ENCODE measurements at regions of chr18 and their contacts with region 1.

Region 1: GRCh38 chr18:44895176-44895798 is 214.6 kb downstream of the SETBP1 start:
- DNase-seq: peak; percentile 52
- H3K4me3 ChIP-seq: no peak overlapping the region
- H3K27ac ChIP-seq: no peak overlapping the region
- H3K4me1 ChIP-seq: peaks cover 19% of the 10 kb centered on the region
- H3K27me3 ChIP-seq: no peaks in the 10 kb centered on the region

Region 2: GRCh38 chr18:44651453-44651852 is 243.8 kb before region 1 on chr18:
- in situ Hi-C with region 1: no loop called
- DNase-seq: peak; percentile 78
- H3K4me3 ChIP-seq: no peak overlapping the region
- H3K27ac ChIP-seq: no peak overlapping the region
- H3K4me1 ChIP-seq: peaks cover 24% of the 10 kb centered on the region
- H3K27me3 ChIP-seq: no peaks in the 10 kb centered on the region

Region 3: DNA sequence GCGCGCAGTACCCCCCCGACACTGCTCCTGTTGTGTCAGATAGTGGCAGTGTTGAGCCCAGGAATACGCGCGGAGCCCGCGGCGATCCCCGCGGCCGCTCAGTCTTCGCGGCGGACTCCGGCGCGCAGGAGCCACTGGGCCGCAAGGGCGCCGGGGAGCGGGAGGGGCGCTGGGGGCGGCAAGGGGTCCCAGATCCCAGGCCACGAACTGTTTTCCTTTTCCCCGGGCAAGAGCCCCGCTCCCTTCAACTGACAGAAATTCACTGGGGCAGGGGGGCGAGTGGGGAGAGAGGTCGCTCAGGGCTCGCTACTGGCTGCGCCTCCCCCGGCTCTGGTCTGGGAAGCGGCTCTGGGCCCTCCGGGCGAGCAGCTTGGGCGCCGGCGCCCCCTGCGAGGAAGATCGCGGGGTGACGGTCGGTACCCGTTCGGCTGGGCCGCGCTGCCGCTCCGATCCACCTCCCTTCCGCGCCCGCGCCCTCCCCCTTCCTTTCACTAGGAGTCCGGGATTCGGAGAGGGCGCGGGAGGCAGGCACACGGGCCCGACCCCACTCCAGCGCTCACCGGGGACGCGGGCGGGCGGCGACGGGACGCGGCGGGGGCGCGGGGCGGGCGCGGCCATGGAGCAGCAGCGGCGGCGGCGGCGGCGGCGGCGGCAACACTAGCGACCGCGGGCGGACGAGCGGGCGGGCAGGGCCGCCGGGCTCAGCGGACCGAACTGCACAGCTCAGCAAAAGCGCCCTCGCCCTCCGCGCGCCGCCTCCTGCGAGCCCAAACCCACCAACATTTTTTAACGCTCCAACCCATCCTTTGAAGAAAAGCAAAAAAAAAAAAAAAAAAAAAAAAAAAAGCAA is 216.0 kb before region 1 on chr18:
- in situ Hi-C with region 1: loop called (anchors 10 kb)
- DNase-seq: peak; percentile 96
- H3K4me3 ChIP-seq: peak overlapping the region; percentile 91
- H3K27ac ChIP-seq: peak overlapping the region; percentile 79
- H3K4me1 ChIP-seq: peaks cover 22% of the 10 kb centered on the region
- H3K27me3 ChIP-seq: no peaks in the 10 kb centered on the region

Region 4: DNA sequence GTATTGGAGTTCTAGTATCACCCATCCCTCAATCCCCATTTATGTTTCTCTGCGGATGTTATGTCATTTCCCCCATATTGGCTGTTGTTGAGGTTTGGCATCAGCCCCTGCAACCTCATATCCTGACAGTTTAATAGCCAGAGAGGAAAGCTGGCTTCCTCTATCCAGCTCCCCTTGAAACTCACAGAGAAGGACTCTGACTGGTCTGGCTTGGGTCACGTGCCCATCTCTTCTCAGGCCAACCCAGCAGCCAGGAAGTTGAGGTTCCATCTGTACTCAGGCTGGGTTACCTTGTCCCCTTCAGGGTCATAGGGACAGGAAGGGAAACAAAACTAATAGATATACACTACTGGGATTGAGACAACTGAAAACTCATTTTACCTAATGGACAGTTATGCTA is 572.0 kb after region 1 on chr18:
- in situ Hi-C with region 1: no loop called
- DNase-seq: no peak
- H3K4me3 ChIP-seq: no peak overlapping the region
- H3K27ac ChIP-seq: no peak overlapping the region
- H3K4me1 ChIP-seq: no peaks in the 10 kb centered on the region
- H3K27me3 ChIP-seq: peaks cover 14% of the 10 kb centered on the region; the same call in 1 of the 2 replicates

Measured in GM23248 (cell line).